ENCODE measurements at regions of chrX and their contacts with region 1.

Region 1: DNA sequence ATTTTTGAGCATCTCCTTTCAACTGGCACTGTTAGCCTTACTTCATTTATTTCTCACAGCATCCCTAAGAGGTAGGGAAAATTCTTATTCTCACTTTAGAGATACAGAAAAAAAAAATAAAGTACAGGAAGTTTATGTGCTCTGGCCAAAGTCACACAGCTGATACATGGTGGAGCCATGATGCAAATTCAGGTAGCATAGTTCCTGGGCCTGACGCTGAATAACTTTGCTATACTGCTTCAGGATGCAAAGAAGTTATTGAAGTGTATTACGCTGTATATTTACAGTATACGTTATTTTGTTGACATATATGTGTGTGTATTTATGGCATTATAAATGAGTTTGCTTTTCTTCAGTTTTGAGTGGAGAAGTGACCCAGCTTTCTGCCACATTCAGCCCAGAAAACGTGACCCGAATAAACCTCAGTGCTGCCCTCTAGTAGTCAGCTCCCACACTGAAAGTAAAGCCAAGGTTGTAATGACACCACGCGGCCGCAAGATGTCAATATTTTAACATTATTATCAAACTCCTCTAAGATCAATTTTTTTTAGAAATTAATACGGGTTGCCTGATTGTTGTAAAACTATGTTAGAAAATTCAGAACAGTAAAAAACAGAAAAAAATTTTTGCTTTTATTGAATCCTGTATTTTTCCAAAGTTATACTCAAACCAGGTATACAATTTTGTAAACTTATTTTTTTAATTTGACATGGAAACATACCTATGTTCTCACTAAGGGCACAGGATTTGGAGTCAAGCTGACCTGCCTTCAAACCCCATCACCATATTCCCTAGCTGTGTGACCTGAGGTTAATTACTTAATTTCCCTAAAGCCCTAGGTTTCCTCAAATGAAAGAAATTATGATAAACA is 3.8 kb upstream of the GUCY2F start:
- DNase-seq: peak; percentile 49
- ATAC-seq: peak; percentile 54; the same call in 1 of the 2 replicates
- H3K4me3 ChIP-seq: no peak overlapping the region
- H3K27ac ChIP-seq: no peak overlapping the region
- H3K4me1 ChIP-seq: no peaks in the 10 kb centered on the region
- H3K27me3 ChIP-seq: no peaks in the 10 kb centered on the region
- CTCF ChIP-seq: peak; percentile 73 to 99 (median 80)
- POLR2A ChIP-seq: no peak
- RAD21 ChIP-seq: peak; percentile 79

Region 2: DNA sequence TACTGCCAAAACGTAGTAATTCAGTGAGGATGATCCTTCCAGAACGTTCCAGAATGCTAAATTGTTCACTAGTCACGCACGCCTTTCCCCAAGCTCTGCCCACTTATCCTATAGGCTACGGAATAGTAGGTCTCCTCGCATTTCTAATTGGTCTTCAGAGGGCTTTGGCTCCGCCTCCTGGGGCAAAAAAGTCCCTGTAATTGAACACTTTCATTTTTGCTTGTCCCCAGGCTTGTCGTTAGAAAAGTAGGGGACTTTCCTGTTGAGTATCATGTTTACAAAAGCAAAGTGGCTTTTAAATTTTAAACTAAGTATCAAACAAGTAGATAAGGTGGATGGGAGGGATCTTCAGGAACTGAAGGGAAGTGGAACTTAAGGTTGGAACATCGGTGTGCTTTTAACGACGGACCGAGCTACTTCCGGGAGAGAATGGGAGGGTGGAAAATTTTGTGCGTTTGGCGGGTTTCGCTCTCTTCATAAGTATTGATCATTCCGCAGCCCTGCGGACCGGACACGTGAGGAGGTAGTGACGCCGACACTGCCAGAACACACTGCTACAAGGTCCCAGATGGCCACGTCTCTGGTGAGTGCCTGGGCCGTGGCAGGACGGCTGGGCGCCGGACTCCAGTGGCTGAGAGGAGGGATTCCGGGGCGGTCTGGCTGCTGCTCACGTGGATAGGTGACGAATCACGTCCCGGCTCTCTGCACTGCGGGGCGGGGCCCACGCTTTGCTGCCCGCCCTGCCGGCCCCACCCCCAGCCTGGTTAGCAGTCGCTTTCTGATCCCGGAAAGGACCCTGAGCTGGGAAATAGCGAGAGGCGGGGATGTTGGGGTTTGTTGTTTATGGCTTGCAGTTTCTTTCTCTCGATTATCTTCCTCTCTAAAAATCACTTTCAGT is 51.0 kb after region 1 on chrX and contains the start of gene NXT2:
- CTCF ChIA-PET with region 1: no interaction called
- POLR2A ChIA-PET with region 1: no interaction called
- RAD21 ChIA-PET with region 1: no interaction called
- intact Hi-C with region 1: no loop called
- DNase-seq: peak; percentile 88
- ATAC-seq: peak; percentile 98
- H3K4me3 ChIP-seq: peak within 1 kb of the TSS; percentile 56 to 58
- H3K27ac ChIP-seq: peak within 1 kb of the TSS; percentile 74
- H3K4me1 ChIP-seq: peaks cover 2 to 16% of the 10 kb centered on the region in 2 experiments; a peak in 2 of 4 replicates
- H3K27me3 ChIP-seq: no peaks in the 10 kb centered on the region
- CTCF ChIP-seq: no peak
- POLR2A ChIP-seq: peak; percentile 67
- RAD21 ChIP-seq: no peak
- total RNA-seq, gene NXT2: 14.3 TPM

Region 3: GRCh38 chrX:109635176-109635575 is 149.5 kb after region 1 on chrX:
- CTCF ChIA-PET with region 1: interaction called, 27 read pairs
- POLR2A ChIA-PET with region 1: no interaction called
- RAD21 ChIA-PET with region 1: interaction called in 1 of 2 experiments, 3 read pairs
- intact Hi-C with region 1: loop called (anchors 1 kb)
- DNase-seq: no peak
- ATAC-seq: peak; percentile 57; the same call in 1 of the 2 replicates
- H3K4me3 ChIP-seq: no peak overlapping the region
- H3K27ac ChIP-seq: no peak overlapping the region
- H3K4me1 ChIP-seq: no peaks in the 10 kb centered on the region
- H3K27me3 ChIP-seq: no peaks in the 10 kb centered on the region
- CTCF ChIP-seq: peak in 2 of 3 experiments; percentile 44 to 58; a peak in 4 of 6 replicates
- POLR2A ChIP-seq: no peak
- RAD21 ChIP-seq: 0 out of 2 replicates have a peak, but pooled peaks have one; percentile 15

Region 4: DNA sequence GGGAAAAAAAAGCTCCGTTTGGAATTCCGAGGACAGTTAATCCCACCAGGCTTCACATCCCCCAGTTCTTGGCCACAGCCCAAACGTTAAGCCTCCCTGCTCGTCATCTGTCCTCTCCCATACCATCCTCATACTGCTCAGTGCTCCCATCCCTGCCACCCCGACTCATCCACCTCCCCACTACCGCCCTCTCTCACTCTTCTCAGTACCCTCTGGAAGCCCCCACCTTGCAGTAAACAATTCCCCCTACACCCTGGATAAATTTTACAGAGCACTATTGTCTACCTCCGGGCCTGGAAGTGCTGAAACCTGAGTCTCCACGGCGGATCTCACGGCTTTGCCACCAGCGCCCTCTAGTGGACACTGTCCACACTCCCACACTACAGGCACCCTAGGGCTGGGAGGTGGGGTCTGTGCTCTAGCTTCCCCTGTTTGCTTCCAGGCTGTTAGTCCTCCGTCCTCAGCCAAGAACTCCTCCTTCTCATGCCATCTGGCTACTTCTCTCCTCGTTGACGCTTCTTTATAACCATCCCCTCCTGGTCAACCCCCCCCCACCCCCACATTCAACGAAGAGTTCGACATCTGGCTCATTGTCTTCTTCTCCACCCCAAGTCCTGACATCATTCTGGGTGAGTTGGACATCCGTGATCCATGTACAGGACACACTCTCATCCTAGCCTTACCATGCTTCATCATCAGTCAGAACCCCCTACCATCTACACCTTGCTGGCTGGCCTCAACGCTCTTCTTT is 927.4 kb after region 1 on chrX:
- CTCF ChIA-PET with region 1: no interaction called
- POLR2A ChIA-PET with region 1: no interaction called
- RAD21 ChIA-PET with region 1: no interaction called
- intact Hi-C with region 1: loop called (anchors 10 kb)
- DNase-seq: no peak
- ATAC-seq: peak; percentile 94
- H3K4me3 ChIP-seq: peak overlapping the region; percentile 20 to 43; a peak in 3 of 4 replicates
- H3K27ac ChIP-seq: no peak overlapping the region
- H3K4me1 ChIP-seq: peaks cover 5 to 22% of the 10 kb centered on the region in 2 experiments; a peak in 3 of 4 replicates
- H3K27me3 ChIP-seq: no peaks in the 10 kb centered on the region
- CTCF ChIP-seq: peak; percentile 52 to 79 (median 71); a peak in 5 of 6 replicates
- POLR2A ChIP-seq: no peak
- RAD21 ChIP-seq: peak; percentile 69